Tibial artery (tissue), 4 donors: ENCODE measurements at regions of chr7 and their contacts with region 1.

Region 1: DNA sequence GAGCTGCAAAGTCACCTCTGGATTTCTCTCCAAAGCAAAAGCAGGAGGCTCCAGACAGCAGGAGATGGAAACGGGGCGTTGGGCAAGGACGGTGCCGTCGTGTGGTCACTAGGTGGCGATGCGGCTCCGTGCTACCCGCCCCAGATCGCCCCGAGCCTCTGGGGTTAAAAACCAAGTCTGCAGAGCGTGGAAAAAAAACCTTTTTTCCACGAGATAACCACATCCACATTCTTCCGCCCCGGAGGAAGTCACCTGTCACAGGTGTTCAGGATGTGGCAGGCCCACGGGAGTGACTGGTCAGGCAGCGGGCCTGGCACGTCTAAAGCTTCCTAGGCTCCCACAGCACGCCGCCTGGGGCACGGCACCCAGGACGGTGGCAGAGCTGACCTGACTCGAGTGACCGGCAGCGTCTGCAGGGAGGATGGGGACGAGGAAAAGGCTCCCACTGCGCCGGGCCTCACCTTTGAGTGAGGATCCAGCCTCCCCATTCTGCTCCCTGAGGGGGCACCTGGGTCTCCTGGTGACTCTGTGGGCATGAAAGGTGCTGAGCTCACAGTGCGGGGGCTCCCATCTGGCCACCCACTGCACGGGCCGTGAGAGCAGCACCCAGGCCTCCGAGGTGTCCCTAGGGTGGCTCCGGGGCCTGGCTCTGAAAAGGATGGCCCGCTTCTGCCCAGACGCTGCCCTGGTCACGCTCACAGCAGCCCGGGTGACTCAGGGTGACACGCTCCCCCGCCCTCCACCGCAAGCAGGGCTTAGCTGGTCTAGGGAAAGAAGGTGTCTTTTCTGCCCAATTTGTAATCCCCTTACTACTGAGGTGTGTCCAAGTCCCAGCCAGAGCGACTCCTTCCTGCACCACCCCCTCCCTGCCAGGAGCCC is 71.3 kb upstream of the TNRC18 start:
- DNase-seq: peak; percentile 65 to 87
- H3K4me3 ChIP-seq: peak overlapping the region; percentile 47 to 49
- H3K27ac ChIP-seq: peak overlapping the region; percentile 86 to 87
- H3K4me1 ChIP-seq: peaks cover 0 to 27% (median 21%) of the 10 kb centered on the region in 4 donors
- H3K27me3 ChIP-seq: no peaks in the 10 kb centered on the region
- CTCF ChIP-seq: peak; percentile 95

Region 2: GRCh38 chr7:5677538-5678294 is 182.8 kb after region 1 on chr7:
- intact Hi-C with region 1: loop called (anchors 5 kb)
- DNase-seq: peak; percentile 69 to 81
- H3K4me3 ChIP-seq: no peak overlapping the region
- H3K27ac ChIP-seq: peak overlapping the region; percentile 17 to 44
- H3K4me1 ChIP-seq: peaks cover 0 to 67% (median 44%) of the 10 kb centered on the region in 4 donors
- H3K27me3 ChIP-seq: no peaks in the 10 kb centered on the region
- CTCF ChIP-seq: peak; percentile 75 to 84